Activated CD8-positive, alpha-beta T cell treated with anti-CD3 and anti-CD28 coated beads, Interleukin-2, amount 10 ng/mL, durations not matched to agents 7 days and 5 days (primary cell): ENCODE measurements at regions of chr19 and their contacts with region 1.

Region 1: DNA sequence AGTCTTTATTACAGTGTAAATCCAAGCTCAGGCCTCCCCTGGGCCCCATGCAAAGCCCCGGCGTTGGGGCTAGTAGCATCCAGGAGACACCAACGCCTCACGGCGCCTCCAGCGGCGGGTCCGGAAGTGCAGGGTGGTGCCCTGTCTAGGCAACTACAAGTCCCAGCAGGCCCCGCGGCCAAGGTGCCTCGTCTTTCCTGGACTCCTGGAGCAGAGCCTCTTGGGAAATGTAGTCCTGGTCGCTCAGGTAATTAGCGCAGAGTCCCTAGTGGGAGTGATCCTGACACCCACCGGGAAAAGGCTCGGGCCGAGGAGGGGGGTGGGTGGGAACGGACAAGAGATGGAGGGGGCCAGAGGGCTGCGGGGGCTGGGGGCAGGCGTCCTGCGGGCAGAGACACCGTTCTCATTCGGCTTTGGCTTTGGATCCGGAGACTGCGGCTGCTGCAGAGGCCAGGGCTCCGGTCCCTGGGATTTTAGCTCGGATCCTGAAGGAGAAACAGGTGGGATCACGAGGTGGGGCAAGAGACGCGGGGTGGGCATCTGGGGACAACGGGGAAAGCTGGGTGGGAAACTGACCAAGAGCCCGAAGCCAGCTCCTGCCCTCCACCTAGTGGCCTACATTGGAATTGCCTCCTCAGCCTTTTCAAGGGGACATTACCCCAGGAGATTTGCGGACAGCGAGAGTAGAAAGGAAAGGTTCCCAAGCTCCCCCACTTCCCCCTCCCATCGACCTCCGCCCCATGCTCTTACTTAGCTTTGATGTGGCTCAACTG is 11.4 kb downstream of the RTN2 start:
- DNase-seq: peak; percentile 99
- ATAC-seq: peak; percentile 97
- H3K4me3 Mint-ChIP-seq: peak overlapping the region; percentile 86
- H3K27ac Mint-ChIP-seq: peak overlapping the region; percentile 83
- H3K4me1 Mint-ChIP-seq: peaks cover 11% of the 10 kb centered on the region
- H3K27me3 Mint-ChIP-seq: peaks cover 3% of the 10 kb centered on the region

Region 2: GRCh38 chr19:45423589-45424190 is 61.8 kb before region 1 on chr19 and contains the start of gene ERCC1:
- CTCF ChIA-PET with region 1: interaction called, 19 read pairs
- POLR2A ChIA-PET with region 1: no interaction called
- DNase-seq: peak; percentile 95
- ATAC-seq: peak; percentile 73
- H3K4me3 Mint-ChIP-seq: peak within 1 kb of the TSS; percentile 84
- H3K27ac Mint-ChIP-seq: peak within 1 kb of the TSS; percentile 87
- H3K4me1 Mint-ChIP-seq: peaks cover 72% of the 10 kb centered on the region
- H3K27me3 Mint-ChIP-seq: peaks cover 4% of the 10 kb centered on the region
- total RNA-seq, gene ERCC1: 57.5 to 64.8 TPM

Region 3: DNA sequence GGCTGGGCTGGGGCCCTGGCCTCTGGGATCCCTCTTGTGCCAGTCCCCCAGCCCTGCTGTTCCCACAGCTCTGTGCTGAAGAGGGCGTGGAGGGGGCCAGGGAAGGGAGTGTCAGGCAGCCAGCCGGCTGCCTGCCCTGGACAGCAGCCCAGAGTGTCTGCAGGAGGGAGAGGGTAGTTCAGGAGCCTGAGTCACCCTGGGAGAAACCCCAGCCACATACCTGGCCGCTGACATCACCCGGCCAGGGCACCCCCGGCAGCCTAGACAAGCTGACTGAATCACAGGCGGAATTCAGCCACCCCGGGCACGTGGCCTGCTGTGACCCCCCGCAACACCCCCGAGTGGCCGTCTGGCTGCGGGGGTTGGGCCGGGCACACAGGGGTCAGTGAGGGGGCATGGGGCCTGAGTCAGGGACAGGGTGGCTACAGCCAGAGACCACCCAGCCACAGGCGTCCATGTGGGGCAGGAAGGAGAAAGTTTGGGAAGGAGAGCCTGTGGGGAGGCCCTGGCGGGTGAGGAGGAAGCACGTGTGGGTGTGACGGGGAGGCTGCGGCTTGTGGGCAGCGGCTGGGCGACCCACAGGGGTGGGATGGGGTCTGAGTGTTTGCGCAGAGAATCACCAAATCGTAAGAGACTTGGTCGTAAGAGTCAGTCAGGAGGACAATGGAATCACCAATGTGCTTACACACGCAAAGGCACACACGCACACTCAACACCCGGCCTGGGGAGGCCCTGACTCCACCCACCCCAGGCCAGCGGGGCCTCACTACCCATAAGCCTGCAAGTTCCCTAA is 29.6 kb before region 1 on chr19:
- CTCF ChIA-PET with region 1: interaction called, 14 read pairs
- POLR2A ChIA-PET with region 1: interaction called, 3 read pairs
- DNase-seq: peak; percentile 58
- ATAC-seq: peak; percentile 48
- H3K4me3 Mint-ChIP-seq: peak overlapping the region; percentile 12
- H3K27ac Mint-ChIP-seq: no peak overlapping the region
- H3K4me1 Mint-ChIP-seq: peaks cover 34% of the 10 kb centered on the region
- H3K27me3 Mint-ChIP-seq: peaks cover 12% of the 10 kb centered on the region

Region 4: DNA sequence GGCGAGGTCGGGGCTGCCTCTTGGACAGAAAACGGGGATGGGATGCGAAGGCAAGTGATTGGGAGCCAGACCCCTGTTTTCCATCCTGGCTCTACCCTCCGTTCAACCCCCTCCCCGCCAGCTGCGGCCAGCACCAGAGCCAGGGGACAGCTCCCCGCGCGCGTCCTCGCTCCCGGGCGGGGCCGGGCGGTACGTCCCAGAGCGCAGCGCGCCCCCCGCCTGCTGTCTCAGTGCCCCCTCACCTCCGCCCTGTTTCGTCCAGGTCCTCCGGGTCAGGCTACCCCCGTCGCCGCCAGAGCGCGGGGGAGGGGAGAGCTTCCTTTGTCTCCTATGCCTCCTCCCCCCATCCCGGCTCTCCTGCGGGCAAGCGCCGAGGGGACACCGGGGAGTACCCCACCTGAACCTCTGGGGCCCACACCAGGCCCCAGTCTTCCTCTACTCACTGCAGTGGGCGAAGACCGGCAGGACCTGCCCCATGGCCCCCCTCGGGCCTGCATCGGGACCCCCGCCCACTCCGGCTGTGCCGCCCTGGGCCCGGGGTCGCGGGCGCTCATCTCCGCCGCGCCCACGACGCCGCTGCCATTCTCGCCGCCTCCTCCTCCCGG is 11.0 kb after region 1 on chr19:
- CTCF ChIA-PET with region 1: interaction called, 83 read pairs
- POLR2A ChIA-PET with region 1: no interaction called
- DNase-seq: peak; percentile 66
- ATAC-seq: peak; percentile 10
- H3K4me3 Mint-ChIP-seq: peak overlapping the region; percentile 5
- H3K27ac Mint-ChIP-seq: no peak overlapping the region
- H3K4me1 Mint-ChIP-seq: peaks cover 37% of the 10 kb centered on the region
- H3K27me3 Mint-ChIP-seq: peaks cover 15% of the 10 kb centered on the region

Region 5: GRCh38 chr19:45558399-45558878 is 72.9 kb after region 1 on chr19:
- CTCF ChIA-PET with region 1: interaction called, 14 read pairs
- POLR2A ChIA-PET with region 1: no interaction called
- DNase-seq: peak; percentile 82
- ATAC-seq: peak; percentile 98
- H3K4me3 Mint-ChIP-seq: no peak overlapping the region
- H3K27ac Mint-ChIP-seq: peak overlapping the region; percentile 62
- H3K4me1 Mint-ChIP-seq: peaks cover 28% of the 10 kb centered on the region
- H3K27me3 Mint-ChIP-seq: no peaks in the 10 kb centered on the region